Transverse colon (tissue), 4 donors: ENCODE measurements at regions of chr1 and their contacts with region 1.

Region 1: GRCh38 chr1:25917996-25918395 is 11.8 kb upstream of the STMN1 start:
- DNase-seq: no peak
- H3K4me3 ChIP-seq: no peak overlapping the region
- H3K27ac ChIP-seq: no peak overlapping the region
- H3K4me1 ChIP-seq: peaks cover 0 to 16% (median 9%) of the 10 kb centered on the region in 4 donors
- H3K27me3 ChIP-seq: peaks cover 12% of the 10 kb centered on the region
- CTCF ChIP-seq: no peak
- EP300 ChIP-seq: no peak
- POLR2A ChIP-seq: no peak

Region 2: GRCh38 chr1:25933479-25934365 is 15.7 kb after region 1 on chr1:
- in situ Hi-C with region 1: no loop called
- intact Hi-C with region 1: no loop called
- DNase-seq: no peak
- H3K4me3 ChIP-seq: no peak overlapping the region
- H3K27ac ChIP-seq: no peak overlapping the region
- H3K4me1 ChIP-seq: peaks cover 0 to 7% (median 2%) of the 10 kb centered on the region in 4 donors
- H3K27me3 ChIP-seq: peaks cover 7% of the 10 kb centered on the region
- CTCF ChIP-seq: no peak
- EP300 ChIP-seq: no peak
- POLR2A ChIP-seq: no peak

Region 3: DNA sequence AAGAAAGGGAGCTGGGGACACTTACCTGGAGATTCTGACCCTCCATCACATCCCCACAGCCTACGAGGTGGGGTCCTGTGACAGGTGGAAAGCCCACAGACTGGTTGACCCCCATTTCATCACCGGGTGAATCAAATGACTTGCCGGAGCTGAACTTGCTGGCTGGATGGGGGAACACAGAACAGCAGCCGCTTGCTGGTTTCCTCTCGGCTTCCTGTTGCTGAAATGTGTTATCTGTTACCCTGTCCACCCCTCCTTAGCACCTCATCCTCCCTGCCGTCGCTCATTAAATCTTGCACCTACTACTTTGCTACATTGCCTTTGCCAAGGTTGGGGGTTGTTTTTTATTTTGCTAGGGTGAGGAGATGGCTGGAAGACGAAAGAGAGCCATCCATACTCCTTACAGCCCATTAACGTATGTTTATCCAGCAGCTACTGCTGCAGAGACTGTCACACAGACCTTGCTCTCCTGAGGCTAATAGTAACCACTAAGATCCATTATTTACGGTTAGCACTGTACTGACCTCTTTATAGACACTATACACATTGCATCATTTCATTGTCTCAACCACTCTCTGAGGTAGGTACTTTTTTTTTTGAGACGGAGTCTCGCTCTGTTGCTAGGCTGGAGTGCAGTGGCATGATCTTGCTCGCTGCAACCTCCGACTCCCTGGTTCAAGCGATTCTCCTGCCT is 72.9 kb after region 1 on chr1:
- in situ Hi-C with region 1: no loop called
- intact Hi-C with region 1: loop called (anchors 5 kb)
- DNase-seq: no peak
- H3K4me3 ChIP-seq: peak overlapping the region in 1 of 4 donors; percentile 20
- H3K27ac ChIP-seq: peak overlapping the region in 1 of 4 donors; percentile 7
- H3K4me1 ChIP-seq: no peaks in the 10 kb centered on the region
- H3K27me3 ChIP-seq: no peaks in the 10 kb centered on the region
- CTCF ChIP-seq: no peak
- EP300 ChIP-seq: no peak
- POLR2A ChIP-seq: no peak